HCT116 (cell line): ENCODE measurements at regions of chr14 and their contacts with region 1.

Region 1: DNA sequence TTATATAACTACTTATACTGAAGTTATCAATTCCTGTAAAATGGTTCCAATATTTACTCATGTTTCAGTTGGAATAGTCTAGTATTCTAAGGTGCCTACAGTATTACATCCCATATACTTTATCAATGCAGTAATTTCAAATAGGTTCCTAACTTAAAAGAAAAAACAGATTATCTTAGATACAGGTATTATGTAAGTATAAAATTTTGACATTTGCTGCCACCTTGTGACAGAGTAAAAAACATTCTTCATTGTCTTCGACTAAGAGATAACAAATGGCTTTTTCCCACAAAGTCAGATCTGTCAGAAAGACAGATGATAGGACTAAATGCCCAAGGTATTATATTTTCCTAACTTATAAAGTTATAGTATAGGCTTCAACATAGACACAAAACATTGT is 78.7 kb downstream of the TXNDC16 start:
- DNase-seq: peak; percentile 28
- ATAC-seq: no peak
- H3K4me3 ChIP-seq: no peak overlapping the region
- H3K27ac ChIP-seq: no peak overlapping the region
- H3K4me1 ChIP-seq: no peaks in the 10 kb centered on the region
- H3K27me3 ChIP-seq: no peaks in the 10 kb centered on the region
- CTCF ChIP-seq: peak; percentile 13 to 50 (median 35); a peak in 4 of 6 replicates
- POLR2A ChIP-seq: no peak
- RAD21 ChIP-seq: peak; percentile 57

Region 2: DNA sequence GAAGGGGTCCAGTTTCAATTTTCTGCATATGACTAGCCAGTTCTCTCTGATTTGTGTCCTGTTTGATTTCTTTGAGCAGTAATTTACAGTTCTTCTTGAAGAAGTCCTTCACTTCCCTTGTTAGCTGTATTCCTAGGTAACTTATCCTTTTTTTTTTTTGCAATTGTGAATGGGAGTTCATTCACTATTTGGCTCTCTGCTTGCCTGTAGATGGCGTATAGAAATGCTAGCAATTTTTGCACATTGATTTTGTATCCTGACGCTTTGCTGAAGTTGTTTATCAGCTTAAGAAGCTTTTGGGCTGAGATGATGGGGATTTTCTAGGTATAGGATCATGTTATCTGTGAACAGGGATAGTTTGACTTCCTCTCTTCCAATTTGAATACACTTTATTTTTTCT is 327.1 kb before region 1 on chr14:
- CTCF ChIA-PET with region 1: no interaction called
- POLR2A ChIA-PET with region 1: no interaction called
- RAD21 ChIA-PET with region 1: no interaction called
- intact Hi-C with region 1: loop called (anchors 5 kb)
- DNase-seq: no peak
- ATAC-seq: no peak
- H3K4me3 ChIP-seq: no peak overlapping the region
- H3K27ac ChIP-seq: no peak overlapping the region
- H3K4me1 ChIP-seq: no peaks in the 10 kb centered on the region
- H3K27me3 ChIP-seq: peaks cover 8% of the 10 kb centered on the region; the same call in 1 of the 2 replicates
- CTCF ChIP-seq: no peak; a peak in 1 of 6 replicates
- POLR2A ChIP-seq: no peak
- RAD21 ChIP-seq: no peak

Region 3: DNA sequence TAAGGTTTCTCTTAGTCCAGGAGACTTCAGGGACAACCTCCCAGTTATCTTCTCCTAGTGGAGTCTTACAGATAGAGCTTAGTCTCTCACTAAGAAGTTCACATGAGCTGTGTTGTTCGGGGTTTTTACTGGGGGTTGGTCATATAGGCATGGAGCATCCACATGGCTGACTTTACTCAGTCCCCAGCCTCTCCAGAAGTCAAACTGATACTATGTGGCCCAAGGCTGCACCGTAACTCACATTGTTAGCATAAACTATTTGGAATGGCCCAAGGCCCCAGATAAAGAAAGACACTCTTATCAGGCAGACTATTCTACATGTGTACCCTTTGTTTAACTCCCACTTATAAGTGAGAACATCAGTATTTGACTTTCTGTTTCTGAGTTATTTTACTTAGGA is 102.3 kb after region 1 on chr14:
- CTCF ChIA-PET with region 1: no interaction called
- POLR2A ChIA-PET with region 1: no interaction called
- RAD21 ChIA-PET with region 1: no interaction called
- intact Hi-C with region 1: no loop called
- DNase-seq: no peak
- ATAC-seq: no peak
- H3K4me3 ChIP-seq: no peak overlapping the region
- H3K27ac ChIP-seq: no peak overlapping the region
- H3K4me1 ChIP-seq: no peaks in the 10 kb centered on the region
- H3K27me3 ChIP-seq: no peaks in the 10 kb centered on the region
- CTCF ChIP-seq: no peak
- POLR2A ChIP-seq: no peak
- RAD21 ChIP-seq: no peak

Region 4: GRCh38 chr14:53346988-53347387 is 873.4 kb after region 1 on chr14:
- CTCF ChIA-PET with region 1: no interaction called
- POLR2A ChIA-PET with region 1: no interaction called
- RAD21 ChIA-PET with region 1: no interaction called
- intact Hi-C with region 1: no loop called
- DNase-seq: no peak
- ATAC-seq: no peak
- H3K4me3 ChIP-seq: no peak overlapping the region
- H3K27ac ChIP-seq: no peak overlapping the region
- H3K4me1 ChIP-seq: no peaks in the 10 kb centered on the region
- H3K27me3 ChIP-seq: no peaks in the 10 kb centered on the region
- CTCF ChIP-seq: no peak
- POLR2A ChIP-seq: no peak
- RAD21 ChIP-seq: no peak